ENCODE measurements at regions of chr2 and their contacts with region 1.

Region 1: GRCh38 chr2:100242891-100243619 is 79.2 kb downstream of the LONRF2 start:
- DNase-seq: peak; percentile 61
- H3K4me3 ChIP-seq: no peak overlapping the region
- H3K27ac ChIP-seq: no peak overlapping the region
- H3K4me1 ChIP-seq: peaks cover 0 to 3% (median 0%) of the 10 kb centered on the region in 4 donors
- H3K27me3 ChIP-seq: no peaks in the 10 kb centered on the region
- CTCF ChIP-seq: peak; percentile 56 to 67 (median 59)
- EP300 ChIP-seq: no peak
- POLR2A ChIP-seq: no peak

Region 2: GRCh38 chr2:99559075-99559662 is 683.9 kb before region 1 on chr2:
- in situ Hi-C with region 1: loop called in 1 of 4 experiments (anchors 10 kb)
- intact Hi-C with region 1: loop called (anchors 5 kb)
- DNase-seq: peak; percentile 85
- H3K4me3 ChIP-seq: no peak overlapping the region
- H3K27ac ChIP-seq: no peak overlapping the region
- H3K4me1 ChIP-seq: no peaks in the 10 kb centered on the region
- H3K27me3 ChIP-seq: no peaks in the 10 kb centered on the region
- CTCF ChIP-seq: peak; percentile 94 to 99 (median 98)
- EP300 ChIP-seq: no peak
- POLR2A ChIP-seq: no peak

Region 3: GRCh38 chr2:99818842-99819241 is 424.2 kb before region 1 on chr2:
- in situ Hi-C with region 1: loop called in 1 of 4 experiments (anchors 25 kb)
- intact Hi-C with region 1: no loop called
- DNase-seq: no peak
- H3K4me3 ChIP-seq: no peak overlapping the region
- H3K27ac ChIP-seq: no peak overlapping the region
- H3K4me1 ChIP-seq: no peaks in the 10 kb centered on the region
- H3K27me3 ChIP-seq: no peaks in the 10 kb centered on the region
- CTCF ChIP-seq: no peak
- EP300 ChIP-seq: no peak
- POLR2A ChIP-seq: no peak

Region 4: DNA sequence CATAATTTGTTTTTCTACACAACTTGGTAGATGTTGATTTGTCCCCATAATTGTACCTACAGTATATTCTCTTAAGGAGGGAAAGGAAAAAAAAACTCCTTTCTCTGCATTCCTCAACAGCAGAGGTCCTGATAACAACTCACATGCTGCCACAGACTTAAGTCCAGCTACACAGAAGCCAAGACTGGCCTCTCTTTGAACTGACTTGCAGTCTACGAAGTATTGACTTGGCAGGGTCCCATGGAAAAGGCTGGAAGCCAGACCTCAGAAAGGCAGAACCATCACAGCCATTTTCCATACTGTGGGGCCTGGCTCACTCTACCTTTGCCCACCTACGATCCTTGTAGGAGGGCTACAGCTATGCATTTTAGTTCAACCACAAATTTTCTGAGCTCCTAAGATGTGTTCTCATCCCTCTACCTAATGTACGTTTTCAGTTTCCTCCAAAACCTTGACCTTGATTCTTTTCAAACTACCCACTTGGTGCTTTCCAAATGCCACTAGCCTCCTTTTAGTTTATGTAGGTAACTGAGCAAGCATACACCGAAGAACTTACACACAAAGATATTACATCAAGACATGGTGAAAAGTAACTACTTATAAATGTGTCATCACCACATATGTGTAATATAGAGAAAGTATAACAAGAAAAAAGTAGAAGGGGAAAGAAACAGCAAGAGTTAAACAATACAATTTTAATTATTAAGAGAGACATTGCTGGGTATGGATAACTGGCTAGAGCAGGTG is 67.1 kb after region 1 on chr2:
- in situ Hi-C with region 1: no loop called
- intact Hi-C with region 1: no loop called
- DNase-seq: no peak
- H3K4me3 ChIP-seq: no peak overlapping the region
- H3K27ac ChIP-seq: no peak overlapping the region
- H3K4me1 ChIP-seq: no peaks in the 10 kb centered on the region
- H3K27me3 ChIP-seq: no peaks in the 10 kb centered on the region
- CTCF ChIP-seq: no peak
- EP300 ChIP-seq: no peak
- POLR2A ChIP-seq: no peak